Left colon (tissue), 2 donors: ENCODE measurements at regions of chr6 and their contacts with region 1.

Region 1: DNA sequence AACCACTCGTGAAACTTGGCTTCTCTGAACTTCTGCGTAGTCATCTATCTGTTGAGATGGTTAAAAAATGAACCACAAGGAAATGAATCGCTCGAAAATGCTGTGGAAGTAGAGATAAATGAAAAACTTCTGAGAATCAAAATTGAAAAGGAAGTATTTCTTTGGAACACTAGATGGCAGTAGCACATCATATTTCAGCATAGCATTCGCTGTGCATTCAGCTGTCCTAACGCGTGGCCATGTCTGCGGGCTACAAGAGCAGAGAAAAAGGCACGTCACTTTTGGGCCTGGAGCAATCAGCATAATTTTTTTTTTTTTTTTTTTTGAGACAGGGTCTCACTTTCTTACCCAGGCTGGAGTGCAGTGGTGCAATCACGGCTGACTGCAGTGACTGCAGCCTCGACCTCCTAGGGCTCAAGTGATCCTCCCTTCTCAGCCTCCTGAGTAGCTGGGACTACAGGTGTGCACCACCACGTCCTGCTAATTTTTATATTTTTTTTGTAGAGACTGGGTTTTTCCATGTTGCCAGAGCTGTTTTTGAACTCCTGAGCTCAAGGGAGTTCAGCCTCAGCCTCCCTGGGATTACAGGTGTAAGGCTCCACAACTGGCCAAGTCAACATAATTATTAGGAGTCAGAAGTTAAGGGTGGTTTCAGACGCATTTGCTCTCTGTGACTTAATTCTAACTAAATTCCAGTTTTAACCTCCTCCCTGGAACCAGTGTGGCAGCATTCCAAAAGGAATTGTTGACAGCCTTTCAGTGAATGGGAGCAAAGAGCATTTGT is 8.8 kb upstream of the PERP start:
- DNase-seq: peak; percentile 35 to 51
- ATAC-seq: peak; percentile 95

Region 2: GRCh38 chr6:137873273-137873762 is 242.8 kb before region 1 on chr6:
- intact Hi-C with region 1: loop called in 1 of 2 experiments (anchors 10 kb)
- DNase-seq: peak; percentile 73 to 94
- ATAC-seq: peak; percentile 93

Region 3: GRCh38 chr6:138001750-138002349 is 114.2 kb before region 1 on chr6:
- intact Hi-C with region 1: loop called in 1 of 2 experiments (anchors 10 kb)
- DNase-seq: peak in 1 of 2 donors; percentile 77
- ATAC-seq: peak; percentile 69

Region 4: GRCh38 chr6:138287144-138287955 is 171.3 kb after region 1 on chr6:
- intact Hi-C with region 1: loop called in 1 of 2 experiments (anchors 5 kb)
- DNase-seq: peak; percentile 52 to 73
- ATAC-seq: peak; percentile 89

Region 5: GRCh38 chr6:138517635-138518034 is 401.6 kb after region 1 on chr6:
- intact Hi-C with region 1: loop called in 1 of 2 experiments (anchors 10 kb)
- DNase-seq: peak; percentile 57 to 64
- ATAC-seq: peak; percentile 94

Region 6: GRCh38 chr6:138590796-138591709 is 475.0 kb after region 1 on chr6:
- intact Hi-C with region 1: loop called in 1 of 2 experiments (anchors 10 kb)
- DNase-seq: peak; percentile 54 to 69
- ATAC-seq: peak; percentile 76

Region 7: GRCh38 chr6:138765896-138766655 is 650.0 kb after region 1 on chr6:
- intact Hi-C with region 1: loop called in 1 of 2 experiments (anchors 10 kb)
- DNase-seq: no peak
- ATAC-seq: no peak